ENCODE measurements at regions of chr5 and their contacts with region 1.

Region 1: GRCh38 chr5:154405078-154405792 is 40.6 kb upstream of the SAP30L start:
- DNase-seq: peak; percentile 59
- ATAC-seq: peak; percentile 99
- H3K4me3 ChIP-seq: peak overlapping the region in 1 of 3 experiments; percentile 62; a peak in 3 of 6 replicates
- H3K27ac ChIP-seq: no peak overlapping the region
- H3K4me1 ChIP-seq: 0 out of 2 replicates have a peak, but pooled peaks cover 9% of the 10 kb centered on the region
- H3K27me3 ChIP-seq: no peaks in the 10 kb centered on the region
- CTCF ChIP-seq: peak; percentile 99
- EP300 ChIP-seq: no peak
- POLR2A ChIP-seq: no peak
- RAD21 ChIP-seq: peak; percentile 99

Region 2: DNA sequence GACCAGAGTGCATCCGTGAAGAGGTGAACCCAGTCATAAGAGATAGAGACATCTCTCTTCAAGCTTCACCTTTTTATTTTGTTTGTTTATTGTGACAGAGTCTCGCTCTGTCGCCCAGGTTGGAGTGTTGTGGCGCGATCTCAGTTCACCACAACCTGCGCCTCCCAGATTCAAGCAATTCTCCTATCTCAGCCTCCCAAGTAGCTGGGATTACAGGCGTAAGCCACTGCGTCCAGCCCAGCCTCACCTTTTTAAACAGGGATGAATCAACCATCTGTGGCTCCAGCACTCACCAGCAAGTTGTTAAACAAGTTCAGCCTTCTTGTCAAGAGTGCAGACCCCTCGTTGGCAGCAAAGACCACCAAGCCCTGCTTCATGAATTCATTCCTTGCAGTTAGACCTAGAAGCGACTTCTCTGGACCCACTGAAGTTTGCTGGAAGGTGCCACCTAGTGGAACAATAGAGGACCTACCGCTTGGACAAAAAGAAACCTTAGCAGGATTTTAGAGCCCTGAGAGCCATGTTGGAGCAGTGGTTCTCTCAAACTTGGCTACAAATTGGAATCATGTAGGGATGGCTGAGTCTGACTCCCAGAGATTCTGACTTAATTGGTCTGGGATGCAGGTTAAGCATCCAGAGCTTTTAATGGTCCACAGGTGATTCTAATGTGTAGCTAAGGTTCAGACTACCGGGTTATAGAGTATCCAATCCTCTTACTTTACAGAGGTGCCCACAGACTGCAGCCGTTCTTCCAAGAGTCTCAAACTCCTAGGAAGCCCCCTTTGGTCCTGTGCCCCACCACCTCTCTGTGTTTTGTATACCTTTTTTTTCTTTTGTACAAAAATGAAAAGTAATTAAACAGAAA is 225.2 kb before region 1 on chr5:
- CTCF ChIA-PET with region 1: no interaction called
- POLR2A ChIA-PET with region 1: no interaction called
- in situ Hi-C with region 1: no loop called
- intact Hi-C with region 1: loop called (anchors 1 kb)
- DNase-seq: peak; percentile 60
- ATAC-seq: peak; percentile 98
- H3K4me3 ChIP-seq: no peak overlapping the region
- H3K27ac ChIP-seq: no peak overlapping the region
- H3K4me1 ChIP-seq: no peaks in the 10 kb centered on the region
- H3K27me3 ChIP-seq: no peaks in the 10 kb centered on the region; a peak in 1 of 5 replicates
- CTCF ChIP-seq: peak; percentile 80
- EP300 ChIP-seq: no peak
- POLR2A ChIP-seq: no peak
- RAD21 ChIP-seq: peak; percentile 37; the same call in 1 of the 2 replicates

Region 3: DNA sequence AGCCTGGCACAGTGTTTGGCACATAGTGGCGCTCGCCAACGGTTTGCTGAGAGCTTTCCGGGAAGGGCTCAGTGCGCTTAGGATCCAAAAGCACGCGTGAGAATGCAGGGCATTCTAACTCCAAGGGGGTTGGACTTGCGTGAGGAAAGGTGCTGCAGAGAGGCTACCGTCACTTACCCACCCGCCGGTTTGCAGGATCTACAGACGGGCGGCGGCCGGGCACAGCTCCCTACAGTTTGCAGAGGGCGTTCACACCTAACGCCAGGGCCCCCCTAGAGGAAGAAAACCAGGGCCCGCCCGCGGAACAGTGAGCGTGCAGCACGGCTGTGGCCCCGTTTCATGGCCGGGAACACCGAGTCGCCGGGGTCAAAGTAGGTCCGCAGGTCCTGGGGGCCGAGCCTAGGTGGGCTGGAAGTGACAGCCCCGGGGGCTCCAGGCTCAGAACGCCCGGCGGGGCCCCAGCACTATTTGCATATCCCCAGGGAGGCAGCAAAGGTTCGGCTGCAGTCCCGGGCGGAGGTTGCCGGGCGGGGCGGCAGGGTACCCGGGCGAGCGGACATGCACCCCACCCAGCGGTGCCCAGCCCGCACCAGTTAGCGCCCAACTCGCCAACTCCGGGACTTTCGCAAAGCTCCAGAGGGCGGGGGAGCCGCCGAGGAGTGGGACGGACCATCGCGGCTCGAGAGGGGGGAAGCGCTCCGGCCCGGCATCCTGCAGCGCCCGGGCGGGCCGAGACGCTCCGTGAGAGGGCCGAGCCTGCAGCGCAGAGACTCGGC is 215.2 kb before region 1 on chr5:
- CTCF ChIA-PET with region 1: interaction called, 3 read pairs
- POLR2A ChIA-PET with region 1: interaction called, 7 read pairs
- in situ Hi-C with region 1: no loop called
- intact Hi-C with region 1: loop called (anchors 2 kb)
- DNase-seq: peak; percentile 61
- ATAC-seq: peak; percentile 86
- H3K4me3 ChIP-seq: peak overlapping the region; percentile 80 to 85 (median 85)
- H3K27ac ChIP-seq: peak overlapping the region; percentile 39
- H3K4me1 ChIP-seq: peaks cover 31% of the 10 kb centered on the region
- H3K27me3 ChIP-seq: peaks cover 0 to 9% of the 10 kb centered on the region in 2 experiments; a peak in 2 of 5 replicates
- CTCF ChIP-seq: no peak
- EP300 ChIP-seq: no peak
- POLR2A ChIP-seq: peak in 1 of 2 experiments; percentile 46; a peak in 1 of 4 replicates
- RAD21 ChIP-seq: 0 out of 2 replicates have a peak, but pooled peaks have one; percentile 18

Region 4: DNA sequence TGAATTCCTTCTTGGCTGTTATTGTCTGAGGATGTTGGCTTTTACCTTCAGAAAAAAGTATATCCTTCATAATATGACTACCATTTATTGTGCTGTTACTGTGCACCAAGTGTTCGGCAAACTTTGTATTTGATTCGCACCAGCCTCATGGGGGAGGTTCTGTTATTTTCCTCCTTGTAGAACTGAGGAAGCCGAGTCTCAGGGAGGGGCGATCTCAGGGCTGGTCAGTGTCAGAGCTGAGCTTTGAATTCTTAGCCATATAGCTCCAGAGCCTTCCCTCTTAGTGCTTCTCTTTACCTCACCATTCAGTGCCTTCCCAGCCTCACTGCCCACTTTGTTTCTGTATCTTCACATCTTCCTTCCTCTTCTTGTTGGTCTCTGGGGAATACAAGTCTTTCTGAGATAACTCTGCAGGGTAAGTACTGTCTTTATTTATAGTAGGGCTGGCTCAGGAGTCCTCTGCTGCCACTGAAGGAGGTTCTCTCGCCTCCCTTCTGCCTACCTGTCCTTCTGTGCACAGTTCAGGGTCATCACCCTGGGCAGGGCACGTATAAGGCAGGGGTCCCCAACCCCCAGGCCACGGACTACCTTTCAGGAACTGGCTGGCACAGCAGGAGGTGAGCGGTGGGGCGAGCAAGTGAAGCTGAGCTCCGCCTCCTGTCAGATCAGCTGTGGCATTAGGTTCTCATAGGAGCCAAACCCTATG is 166.3 kb before region 1 on chr5:
- CTCF ChIA-PET with region 1: no interaction called
- POLR2A ChIA-PET with region 1: no interaction called
- in situ Hi-C with region 1: no loop called
- intact Hi-C with region 1: no loop called
- DNase-seq: no peak
- ATAC-seq: no peak
- H3K4me3 ChIP-seq: no peak overlapping the region
- H3K27ac ChIP-seq: no peak overlapping the region
- H3K4me1 ChIP-seq: no peaks in the 10 kb centered on the region
- H3K27me3 ChIP-seq: no peaks in the 10 kb centered on the region
- CTCF ChIP-seq: no peak
- EP300 ChIP-seq: no peak
- POLR2A ChIP-seq: no peak
- RAD21 ChIP-seq: no peak

Region 5: GRCh38 chr5:154287136-154287535 is 118.1 kb before region 1 on chr5:
- CTCF ChIA-PET with region 1: no interaction called
- POLR2A ChIA-PET with region 1: no interaction called
- in situ Hi-C with region 1: no loop called
- intact Hi-C with region 1: loop called (anchors 1 kb)
- DNase-seq: peak; percentile 80
- ATAC-seq: peak; percentile 79
- H3K4me3 ChIP-seq: no peak overlapping the region
- H3K27ac ChIP-seq: no peak overlapping the region
- H3K4me1 ChIP-seq: peaks cover 50% of the 10 kb centered on the region
- H3K27me3 ChIP-seq: no peaks in the 10 kb centered on the region
- CTCF ChIP-seq: no peak
- EP300 ChIP-seq: peak in 1 of 2 experiments; percentile 26; a peak in 1 of 4 replicates
- POLR2A ChIP-seq: no peak
- RAD21 ChIP-seq: no peak

Region 6: GRCh38 chr5:154334406-154335064 is 70.7 kb before region 1 on chr5:
- CTCF ChIA-PET with region 1: no interaction called
- POLR2A ChIA-PET with region 1: no interaction called
- in situ Hi-C with region 1: no loop called
- intact Hi-C with region 1: loop called (anchors 10 kb)
- DNase-seq: peak; percentile 17
- ATAC-seq: peak; percentile 69
- H3K4me3 ChIP-seq: no peak overlapping the region
- H3K27ac ChIP-seq: no peak overlapping the region
- H3K4me1 ChIP-seq: peaks cover 11% of the 10 kb centered on the region; the same call in 1 of the 2 replicates
- H3K27me3 ChIP-seq: no peaks in the 10 kb centered on the region
- CTCF ChIP-seq: no peak
- EP300 ChIP-seq: no peak
- POLR2A ChIP-seq: no peak
- RAD21 ChIP-seq: no peak